Mammary epithelial cell (primary cell): ENCODE measurements at regions of chr12 and their contacts with region 1.

Region 1: DNA sequence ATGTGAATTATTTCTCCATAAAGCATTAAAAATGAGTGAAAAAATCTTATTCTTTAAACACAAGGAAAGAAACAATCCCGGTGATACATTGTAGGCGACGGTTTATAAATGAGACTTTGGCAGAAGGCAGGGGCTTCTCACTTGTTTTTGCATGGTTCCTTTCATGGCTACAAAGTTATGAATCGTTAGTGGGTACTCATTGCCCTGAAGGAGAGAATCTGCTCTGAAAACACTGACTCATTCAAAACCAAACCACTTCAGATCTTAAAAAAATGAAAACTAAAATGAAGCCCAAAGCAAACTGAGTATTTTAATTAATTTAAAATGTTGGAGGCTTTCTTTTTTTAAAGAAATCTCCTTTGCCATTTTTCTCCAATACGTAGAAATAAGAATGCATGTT is 41.4 kb upstream of the AMIGO2 start:
- DNase-seq: peak; percentile 74
- H3K4me3 ChIP-seq: peak overlapping the region in 1 of 3 experiments; percentile 3
- H3K27ac ChIP-seq: peak overlapping the region; percentile 41
- H3K4me1 ChIP-seq: peaks cover 16% of the 10 kb centered on the region
- H3K27me3 ChIP-seq: no peaks in the 10 kb centered on the region
- CTCF ChIP-seq: no peak

Region 2: GRCh38 chr12:47004634-47005033 is 116.5 kb before region 1 on chr12:
- CTCF ChIA-PET with region 1: no interaction called
- dilution Hi-C with region 1: no loop called
- in situ Hi-C with region 1: no loop called
- intact Hi-C with region 1: no loop called
- DNase-seq: no peak
- H3K4me3 ChIP-seq: no peak overlapping the region
- H3K27ac ChIP-seq: no peak overlapping the region
- H3K4me1 ChIP-seq: no peaks in the 10 kb centered on the region
- H3K27me3 ChIP-seq: no peaks in the 10 kb centered on the region
- CTCF ChIP-seq: no peak

Region 3: GRCh38 chr12:47088021-47088944 is 32.9 kb before region 1 on chr12:
- CTCF ChIA-PET with region 1: no interaction called
- dilution Hi-C with region 1: no loop called
- in situ Hi-C with region 1: no loop called
- intact Hi-C with region 1: loop called (anchors 2 kb)
- DNase-seq: peak; percentile 94
- H3K4me3 ChIP-seq: peak overlapping the region in 1 of 3 experiments; percentile 0
- H3K27ac ChIP-seq: peak overlapping the region; percentile 100
- H3K4me1 ChIP-seq: peaks cover 56% of the 10 kb centered on the region
- H3K27me3 ChIP-seq: no peaks in the 10 kb centered on the region
- CTCF ChIP-seq: no peak

Region 4: DNA sequence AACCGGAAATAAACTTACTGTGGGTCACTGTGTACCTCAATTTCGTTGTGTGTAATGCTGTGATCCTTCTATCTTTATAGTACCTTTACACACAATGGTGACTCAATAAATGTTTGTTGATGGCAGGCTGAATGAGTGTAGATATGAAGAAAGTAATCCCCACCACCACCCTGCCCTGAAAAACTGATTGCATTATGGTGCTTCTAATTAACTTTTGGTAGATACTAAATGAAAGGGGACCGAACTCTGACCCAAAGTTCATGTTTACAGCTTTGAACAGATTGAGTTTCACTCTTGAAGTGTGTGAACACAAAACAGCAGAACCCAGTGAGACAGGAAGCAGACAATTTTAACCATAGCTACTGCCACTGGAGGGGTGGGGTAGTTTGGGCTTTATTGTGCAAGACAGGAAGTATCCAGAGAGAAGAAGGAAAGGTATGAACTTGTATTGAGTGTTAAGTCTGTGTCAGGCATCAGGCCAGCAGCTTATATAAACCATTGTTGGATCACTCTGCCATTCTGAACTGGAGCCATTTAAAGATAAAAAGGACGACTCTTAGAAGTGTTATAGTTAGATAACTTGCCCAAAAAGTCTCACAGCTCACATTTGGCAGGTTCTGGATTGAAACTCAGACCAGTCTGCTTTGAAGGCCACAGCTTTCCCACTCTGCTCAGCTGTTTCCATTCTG is 155.6 kb after region 1 on chr12:
- CTCF ChIA-PET with region 1: no interaction called
- dilution Hi-C with region 1: no loop called
- in situ Hi-C with region 1: no loop called
- intact Hi-C with region 1: no loop called
- DNase-seq: peak; percentile 91
- H3K4me3 ChIP-seq: no peak overlapping the region
- H3K27ac ChIP-seq: peak overlapping the region; percentile 96
- H3K4me1 ChIP-seq: peaks cover 72% of the 10 kb centered on the region
- H3K27me3 ChIP-seq: no peaks in the 10 kb centered on the region
- CTCF ChIP-seq: no peak